K562 (cell line): ENCODE measurements at regions of chr11 and their contacts with region 1.

Region 1: GRCh38 chr11:17598700-17599459 is 51.8 kb downstream of the OTOG start:
- DNase-seq: peak; percentile 67 to 78 (median 75)
- ATAC-seq: peak; percentile 96
- H3K4me3 ChIP-seq: no peak overlapping the region
- H3K27ac ChIP-seq: no peak overlapping the region
- H3K4me1 ChIP-seq: no peaks in the 10 kb centered on the region
- H3K27me3 ChIP-seq: peaks cover 0 to 16% of the 10 kb centered on the region in 2 experiments; a peak in 3 of 5 replicates
- CTCF ChIP-seq: peak; percentile 91 to 94 (median 94)
- EP300 ChIP-seq: no peak
- POLR2A ChIP-seq: no peak
- RAD21 ChIP-seq: peak; percentile 73 to 89

Region 2: GRCh38 chr11:17722000-17722643 is 123.2 kb after region 1 on chr11:
- CTCF ChIA-PET with region 1: no interaction called
- POLR2A ChIA-PET with region 1: interaction called, 3 read pairs
- in situ Hi-C with region 1: loop called (anchors 10 kb)
- intact Hi-C with region 1: loop called (anchors 2 kb)
- DNase-seq: peak; percentile 19 to 41 (median 33)
- ATAC-seq: peak; percentile 79
- H3K4me3 ChIP-seq: no peak overlapping the region
- H3K27ac ChIP-seq: no peak overlapping the region
- H3K4me1 ChIP-seq: peaks cover 0 to 10% of the 10 kb centered on the region in 2 experiments; a peak in 2 of 5 replicates
- H3K27me3 ChIP-seq: peaks cover 0 to 30% of the 10 kb centered on the region in 2 experiments; a peak in 2 of 5 replicates
- CTCF ChIP-seq: peak; percentile 55 to 60 (median 60); a peak in 5 of 6 replicates
- EP300 ChIP-seq: no peak
- POLR2A ChIP-seq: no peak
- RAD21 ChIP-seq: peak in 1 of 2 experiments; percentile 47; a peak in 2 of 4 replicates